Common myeloid progenitor, CD34-positive (primary cell): ENCODE measurements at regions of chr3 and their contacts with region 1.

Region 1: DNA sequence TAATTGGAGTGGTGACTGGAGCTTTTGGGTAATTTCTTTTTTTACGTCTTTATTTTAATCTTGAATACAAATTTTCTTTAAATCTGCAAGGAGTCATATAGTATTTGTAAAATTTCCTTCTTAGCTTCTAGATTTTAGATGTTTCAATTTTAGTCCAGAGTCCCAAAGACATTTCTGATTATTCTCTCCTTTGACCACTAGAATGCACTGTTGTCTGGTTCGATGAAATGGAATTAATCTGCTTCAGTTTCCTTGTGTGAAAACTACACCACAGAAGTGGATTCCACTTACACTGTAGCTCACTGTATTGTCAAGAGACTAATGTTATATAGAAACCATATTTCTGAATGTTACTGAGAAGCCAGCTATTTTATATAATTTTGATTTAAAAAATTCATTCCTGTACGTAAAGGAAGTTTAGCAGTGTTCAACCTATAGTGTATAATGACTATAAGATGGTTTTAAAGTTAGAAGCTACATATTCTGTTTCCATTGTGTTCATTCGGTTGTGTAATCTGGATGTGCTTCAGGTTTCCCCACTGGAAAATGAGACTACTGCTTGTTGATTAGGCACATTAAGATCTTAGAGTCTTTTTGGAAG is 6.1 kb downstream of the GRAMD1C start:
- DNase-seq: peak; percentile 37 to 64 (median 51)
- H3K4me3 ChIP-seq: no peak overlapping the region
- H3K27ac ChIP-seq: no peak overlapping the region
- H3K4me1 ChIP-seq: no peaks in the 10 kb centered on the region
- H3K27me3 ChIP-seq: no peaks in the 10 kb centered on the region

Region 2: GRCh38 chr3:113736548-113737089 is 108.1 kb before region 1 on chr3:
- CTCF ChIA-PET with region 1: interaction called, 11 read pairs
- POLR2A ChIA-PET with region 1: no interaction called
- DNase-seq: peak; percentile 77 to 87 (median 81)
- H3K4me3 ChIP-seq: peak overlapping the region in 1 of 7 experiments; percentile 6
- H3K27ac ChIP-seq: no peak overlapping the region
- H3K4me1 ChIP-seq: peaks cover 0 to 20% (median 10%) of the 10 kb centered on the region in 4 experiments
- H3K27me3 ChIP-seq: no peaks in the 10 kb centered on the region

Region 3: GRCh38 chr3:113912552-113913236 is 68.0 kb after region 1 on chr3:
- CTCF ChIA-PET with region 1: interaction called, 29 read pairs
- POLR2A ChIA-PET with region 1: no interaction called
- DNase-seq: peak; percentile 74 to 80 (median 77)
- H3K4me3 ChIP-seq: peak overlapping the region in 5 of 7 experiments; percentile 7 to 73 (median 46)
- H3K27ac ChIP-seq: peak overlapping the region in 1 of 2 experiments; percentile 47
- H3K4me1 ChIP-seq: peaks cover 0 to 2% (median 0%) of the 10 kb centered on the region in 4 experiments
- H3K27me3 ChIP-seq: no peaks in the 10 kb centered on the region